Prostate gland (tissue), 2 donors: ENCODE measurements at regions of chr1 and their contacts with region 1.

Region 1: GRCh38 chr1:110053557-110054428 is 16.7 kb downstream of the ALX3 start:
- DNase-seq: peak; percentile 54
- H3K4me3 ChIP-seq: no peak overlapping the region
- H3K27ac ChIP-seq: no peak overlapping the region
- H3K4me1 ChIP-seq: no peaks in the 10 kb centered on the region
- H3K27me3 ChIP-seq: no peaks in the 10 kb centered on the region
- CTCF ChIP-seq: peak; percentile 67 to 88 (median 81)
- POLR2A ChIP-seq: no peak

Region 2: GRCh38 chr1:109532365-109533136 is 521.2 kb before region 1 on chr1:
- intact Hi-C with region 1: no loop called
- DNase-seq: peak; percentile 74
- H3K4me3 ChIP-seq: no peak overlapping the region
- H3K27ac ChIP-seq: no peak overlapping the region
- H3K4me1 ChIP-seq: no peaks in the 10 kb centered on the region
- H3K27me3 ChIP-seq: no peaks in the 10 kb centered on the region
- CTCF ChIP-seq: peak; percentile 96 to 97 (median 96)
- POLR2A ChIP-seq: no peak

Region 3: DNA sequence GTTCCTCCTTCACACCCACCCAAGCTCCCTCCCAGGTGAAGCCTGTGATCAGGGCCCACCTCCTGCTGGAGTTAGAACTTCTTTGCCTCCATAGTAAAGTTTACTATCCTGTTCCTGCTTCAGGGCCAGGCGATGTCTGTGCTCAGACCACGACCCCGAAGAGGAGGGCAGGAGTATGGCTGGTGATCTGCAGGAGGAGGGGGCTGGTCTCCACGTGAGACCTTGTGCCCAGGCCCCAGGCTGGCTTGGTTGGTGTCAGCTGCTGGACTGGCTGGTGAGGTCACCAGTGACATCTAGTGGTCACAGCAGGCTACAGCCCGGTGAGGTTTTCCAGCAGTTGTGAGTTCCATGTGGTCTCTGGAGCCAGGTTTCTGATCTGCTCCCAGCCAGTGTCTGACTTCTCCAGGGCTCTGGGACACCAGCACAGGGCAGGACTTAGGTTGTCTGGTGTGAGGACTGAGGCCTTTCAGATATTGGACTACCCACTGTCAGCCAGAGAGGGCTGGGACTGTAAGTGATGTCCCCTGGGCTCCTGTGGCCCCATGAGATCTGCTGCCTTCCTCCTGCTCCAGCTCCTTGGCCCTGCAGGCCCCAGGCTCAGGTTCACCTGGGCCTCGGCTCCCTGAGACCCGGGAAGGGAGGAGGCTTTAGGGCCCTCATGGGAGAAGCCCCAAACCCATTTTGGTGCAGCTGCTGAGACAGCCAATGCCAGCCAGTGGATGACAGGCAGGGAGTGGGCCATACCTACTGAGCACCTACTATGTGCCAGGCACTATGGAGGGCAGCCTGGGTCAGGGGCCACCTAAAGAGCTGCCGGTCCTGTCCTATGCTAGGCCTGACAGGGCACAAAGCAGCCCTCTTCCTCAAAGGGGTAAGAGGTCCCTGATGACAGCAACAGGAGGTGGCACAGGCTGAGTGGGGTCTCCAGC is 52.5 kb after region 1 on chr1:
- intact Hi-C with region 1: loop called (anchors 5 kb)
- DNase-seq: peak; percentile 60
- H3K4me3 ChIP-seq: no peak overlapping the region
- H3K27ac ChIP-seq: no peak overlapping the region
- H3K4me1 ChIP-seq: no peaks in the 10 kb centered on the region
- H3K27me3 ChIP-seq: no peaks in the 10 kb centered on the region
- CTCF ChIP-seq: peak; percentile 52 to 91 (median 74)
- POLR2A ChIP-seq: no peak